Adrenal gland (tissue), 19 donors: ENCODE measurements at regions of chr3 and their contacts with region 1.

Region 1: DNA sequence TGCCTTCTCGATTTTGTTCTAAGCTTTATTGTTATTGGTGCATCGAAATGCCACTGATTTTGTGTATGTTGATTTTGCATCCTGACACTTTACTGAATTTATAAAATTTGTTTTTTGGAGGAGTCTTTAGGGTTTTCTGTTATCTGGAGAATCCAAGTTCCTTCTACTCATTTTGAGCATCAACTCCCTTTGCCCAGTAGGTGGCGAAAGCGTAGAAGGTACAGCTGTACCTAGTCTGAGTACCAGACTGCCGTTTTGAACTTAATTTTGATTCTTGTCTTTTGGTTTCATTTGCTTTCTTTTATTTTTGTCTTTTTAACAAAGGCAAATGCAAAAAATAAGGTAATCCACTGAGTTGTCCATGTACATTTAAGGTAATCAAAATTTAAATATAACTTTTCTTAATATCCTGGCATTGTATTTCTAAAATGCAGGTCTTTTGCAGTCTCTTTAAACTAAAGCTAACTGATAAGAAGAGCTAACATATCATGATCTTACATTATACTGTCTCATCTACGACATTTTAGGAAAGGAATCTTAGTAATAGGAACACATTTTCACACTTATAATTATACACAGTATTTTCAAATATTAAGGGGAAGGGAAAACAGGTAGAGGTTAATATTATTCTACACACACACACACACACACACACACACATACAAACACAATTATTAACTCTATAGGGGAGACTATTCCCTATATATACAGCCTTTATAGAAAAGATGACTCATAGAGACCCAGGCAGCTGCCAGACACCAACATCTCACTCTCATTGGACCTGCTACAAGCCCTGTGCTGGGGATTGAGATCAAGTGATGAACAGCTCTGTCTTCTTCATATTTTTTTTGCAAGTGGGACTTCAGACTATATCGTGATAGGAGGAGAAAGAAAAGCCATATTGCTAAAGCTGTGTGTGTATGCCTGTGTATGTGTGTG is 71.7 kb downstream of the SYNPR start:
- DNase-seq: peak; percentile 51 to 80 (median 69)
- H3K4me3 ChIP-seq: no peak overlapping the region
- H3K27ac ChIP-seq: no peak overlapping the region
- H3K4me1 ChIP-seq: peaks cover 0 to 4% of the 10 kb centered on the region in 2 donors
- H3K27me3 ChIP-seq: no peaks in the 10 kb centered on the region
- CTCF ChIP-seq: peak; percentile 59 to 80 (median 66)
- POLR2A ChIP-seq: no peak

Region 2: DNA sequence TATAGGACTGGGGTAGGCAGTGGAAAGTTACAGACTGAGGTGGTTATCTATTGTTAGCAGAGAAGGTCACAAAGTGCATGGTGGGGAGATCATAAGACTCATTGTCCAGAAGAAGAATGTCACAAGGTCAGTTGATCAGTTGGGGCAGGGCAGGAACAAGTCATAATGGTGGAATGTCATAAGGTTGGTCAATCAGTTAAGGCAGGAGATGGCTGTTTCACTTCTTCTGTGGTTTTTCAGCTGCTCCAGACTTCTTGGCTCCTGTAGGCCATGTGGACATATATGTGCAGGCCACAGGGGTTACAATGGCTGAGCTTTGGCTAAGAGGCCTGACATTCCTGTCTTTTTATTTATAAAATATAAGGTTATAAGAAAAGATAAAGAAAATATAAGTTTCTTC is 233.2 kb after region 1 on chr3:
- intact Hi-C with region 1: no loop called
- DNase-seq: no peak
- H3K4me3 ChIP-seq: no peak overlapping the region
- H3K27ac ChIP-seq: no peak overlapping the region
- H3K4me1 ChIP-seq: no peaks in the 10 kb centered on the region
- H3K27me3 ChIP-seq: no peaks in the 10 kb centered on the region
- CTCF ChIP-seq: no peak
- POLR2A ChIP-seq: no peak

Region 3: GRCh38 chr3:63818281-63819150 is 468.7 kb after region 1 on chr3:
- intact Hi-C with region 1: loop called (anchors 5 kb)
- DNase-seq: peak; percentile 36 to 85 (median 62)
- H3K4me3 ChIP-seq: no peak overlapping the region
- H3K27ac ChIP-seq: no peak overlapping the region
- H3K4me1 ChIP-seq: no peaks in the 10 kb centered on the region
- H3K27me3 ChIP-seq: no peaks in the 10 kb centered on the region
- CTCF ChIP-seq: peak; percentile 80 to 92 (median 88)
- POLR2A ChIP-seq: no peak

Region 4: GRCh38 chr3:63975723-63976122 is 625.9 kb after region 1 on chr3:
- intact Hi-C with region 1: no loop called
- DNase-seq: peak; percentile 48 to 78 (median 61)
- H3K4me3 ChIP-seq: no peak overlapping the region
- H3K27ac ChIP-seq: peak overlapping the region in 1 of 5 donors; percentile 47
- H3K4me1 ChIP-seq: peaks cover 12 to 42% of the 10 kb centered on the region in 2 donors
- H3K27me3 ChIP-seq: no peaks in the 10 kb centered on the region
- CTCF ChIP-seq: no peak
- POLR2A ChIP-seq: no peak

Region 5: DNA sequence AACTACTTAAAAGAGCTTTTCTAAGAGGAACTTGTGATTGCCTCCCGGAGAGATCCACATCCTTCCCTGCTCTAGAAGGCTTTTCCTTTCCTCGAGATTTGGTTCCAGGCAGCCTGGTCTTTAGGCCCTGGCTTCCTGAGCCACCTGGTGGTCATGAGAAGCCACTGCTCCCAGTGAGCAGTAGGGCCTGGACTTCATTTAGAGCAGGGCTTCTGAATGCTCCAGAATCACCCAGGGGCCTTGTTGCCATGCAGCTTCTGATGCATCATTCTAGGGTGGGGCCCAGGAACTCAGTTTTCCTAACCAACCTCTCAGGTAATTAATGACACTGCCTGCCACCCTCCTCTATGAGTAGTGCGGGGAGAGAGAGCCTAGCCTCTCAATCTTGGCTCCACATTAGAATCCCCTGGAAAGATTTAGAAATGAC is 643.8 kb after region 1 on chr3:
- intact Hi-C with region 1: loop called in 1 of 2 experiments (anchors 5 kb)
- DNase-seq: peak; percentile 65 to 88 (median 81)
- H3K4me3 ChIP-seq: no peak overlapping the region
- H3K27ac ChIP-seq: no peak overlapping the region
- H3K4me1 ChIP-seq: peaks cover 0 to under 1% of the 10 kb centered on the region in 2 donors
- H3K27me3 ChIP-seq: no peaks in the 10 kb centered on the region
- CTCF ChIP-seq: peak; percentile 88 to 95 (median 92)
- POLR2A ChIP-seq: no peak

Region 6: DNA sequence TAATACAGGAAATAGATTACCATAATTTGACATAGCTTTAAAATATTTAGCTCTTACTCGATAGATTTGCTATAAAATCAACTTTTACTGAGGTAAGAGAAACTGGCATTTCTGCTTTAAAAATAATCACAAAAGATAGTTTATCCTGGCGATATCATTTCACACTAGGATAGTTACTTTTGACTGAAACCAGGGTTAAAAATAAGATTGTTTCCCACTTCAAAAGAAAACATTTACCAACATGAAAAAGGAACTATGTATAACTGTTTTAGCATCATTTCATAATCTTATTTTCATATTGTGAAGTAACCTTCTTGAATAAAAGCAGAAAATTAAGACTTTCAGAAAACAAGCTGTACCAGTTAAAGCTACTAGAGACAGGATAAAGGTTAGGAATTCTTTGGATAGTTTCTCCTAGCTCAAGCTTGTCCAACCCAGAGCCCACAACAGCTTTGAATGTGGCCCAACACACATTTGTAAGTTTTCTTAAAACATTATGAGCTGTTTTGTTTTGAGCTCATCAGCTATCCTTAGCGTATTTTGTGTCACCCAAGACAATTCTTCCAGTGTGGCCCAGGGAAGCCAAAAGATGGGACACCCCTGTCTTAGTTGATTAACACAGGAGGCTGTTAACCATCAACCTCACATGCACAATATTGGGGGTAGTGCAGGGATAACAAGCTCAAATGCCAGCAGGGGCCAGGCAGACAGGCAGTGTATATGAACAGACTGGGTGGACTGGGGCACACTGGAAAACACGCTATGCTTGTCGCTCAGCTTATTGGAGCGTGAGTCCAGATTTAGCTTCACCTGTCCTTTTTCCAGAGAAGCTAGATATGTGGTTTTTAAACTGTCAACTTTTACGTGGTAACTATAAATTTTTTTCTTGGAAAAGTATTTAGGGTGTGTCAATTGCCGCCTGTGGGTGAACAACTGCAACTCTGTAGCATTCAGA is 658.4 kb after region 1 on chr3:
- intact Hi-C with region 1: no loop called
- DNase-seq: no peak
- H3K4me3 ChIP-seq: no peak overlapping the region
- H3K27ac ChIP-seq: peak overlapping the region in 2 of 5 donors; percentile 1 to 8
- H3K4me1 ChIP-seq: peaks cover 11 to 50% of the 10 kb centered on the region in 2 donors
- H3K27me3 ChIP-seq: no peaks in the 10 kb centered on the region
- CTCF ChIP-seq: no peak
- POLR2A ChIP-seq: no peak